ENCODE measurements at regions of chr4 and their contacts with region 1.

Region 1: GRCh38 chr4:40309250-40309774 is 25.8 kb upstream of the CHRNA9 start:
- DNase-seq: peak; percentile 98
- ATAC-seq: peak; percentile 54
- H3K4me3 Mint-ChIP-seq: peak overlapping the region; percentile 54
- H3K27ac Mint-ChIP-seq: peak overlapping the region; percentile 83
- H3K4me1 Mint-ChIP-seq: peaks cover 90% of the 10 kb centered on the region
- H3K27me3 Mint-ChIP-seq: no peaks in the 10 kb centered on the region
- CTCF ChIP-seq: peak; percentile 90

Region 2: GRCh38 chr4:40056716-40057585 is 252.4 kb before region 1 on chr4 and contains the start of gene N4BP2:
- CTCF ChIA-PET with region 1: interaction called, 16 read pairs
- POLR2A ChIA-PET with region 1: interaction called, 8 read pairs
- intact Hi-C with region 1: loop called (anchors 5 kb)
- DNase-seq: peak; percentile 77
- ATAC-seq: peak; percentile 59
- H3K4me3 Mint-ChIP-seq: peak within 1 kb of the TSS; percentile 96
- H3K27ac Mint-ChIP-seq: peak within 1 kb of the TSS; percentile 97
- H3K4me1 Mint-ChIP-seq: peaks cover 32% of the 10 kb centered on the region
- H3K27me3 Mint-ChIP-seq: peaks cover 6% of the 10 kb centered on the region
- CTCF ChIP-seq: peak; percentile 75
- total RNA-seq, gene N4BP2: 17.4 to 17.5 TPM

Region 3: GRCh38 chr4:40199999-40200874 is 109.1 kb before region 1 on chr4:
- CTCF ChIA-PET with region 1: interaction called, 26 read pairs
- POLR2A ChIA-PET with region 1: interaction called, 326 read pairs
- intact Hi-C with region 1: loop called (anchors 2 kb)
- DNase-seq: peak; percentile 94
- ATAC-seq: peak; percentile 50
- H3K4me3 Mint-ChIP-seq: peak overlapping the region; percentile 99
- H3K27ac Mint-ChIP-seq: peak overlapping the region; percentile 99
- H3K4me1 Mint-ChIP-seq: peaks cover 23% of the 10 kb centered on the region
- H3K27me3 Mint-ChIP-seq: no peaks in the 10 kb centered on the region
- CTCF ChIP-seq: no peak

Region 4: DNA sequence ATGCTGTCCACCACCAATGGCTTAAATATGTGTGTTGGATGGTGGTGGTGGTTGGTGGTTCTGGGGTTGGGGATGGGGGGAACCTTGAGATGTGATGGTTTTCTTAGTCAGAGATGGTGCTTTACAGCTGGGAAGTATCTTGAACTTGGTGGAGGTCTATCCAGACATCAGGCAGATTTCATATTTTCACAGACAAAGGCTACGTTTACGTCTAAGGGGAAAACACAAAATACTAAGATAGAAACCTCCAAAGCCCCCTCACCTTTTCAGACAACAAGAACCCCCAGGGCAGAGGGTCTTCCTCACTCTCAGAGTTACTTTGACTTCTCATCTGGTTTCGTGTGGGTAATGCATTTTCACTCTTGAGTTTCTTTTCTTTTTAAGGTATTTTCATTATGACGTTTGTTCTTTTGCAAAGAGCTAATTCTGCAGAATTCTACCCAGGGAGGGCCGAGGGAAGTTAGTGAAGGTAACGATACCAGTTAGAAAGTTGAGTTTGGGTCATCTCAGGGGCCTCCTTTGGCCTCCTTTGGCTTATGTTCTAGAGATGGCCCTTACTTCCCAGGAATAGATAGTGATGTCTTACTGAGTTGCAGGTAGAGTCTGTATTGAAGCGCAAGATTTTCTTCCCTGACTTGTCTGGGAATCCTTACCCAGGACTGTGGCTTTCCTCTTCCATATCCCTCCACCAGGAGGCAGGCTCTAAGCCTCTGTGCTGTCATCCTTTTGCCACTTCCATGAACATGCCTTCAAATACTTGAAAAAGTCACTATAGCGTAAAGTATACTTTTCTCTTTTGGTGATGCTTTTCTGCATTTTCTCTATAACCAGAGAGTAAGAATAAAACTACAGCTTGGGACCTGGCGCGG is 80.6 kb before region 1 on chr4:
- CTCF ChIA-PET with region 1: interaction called, 120 read pairs
- POLR2A ChIA-PET with region 1: interaction called, 128 read pairs
- intact Hi-C with region 1: loop called (anchors 1 kb)
- DNase-seq: peak; percentile 74
- ATAC-seq: peak; percentile 35
- H3K4me3 Mint-ChIP-seq: peak overlapping the region; percentile 64
- H3K27ac Mint-ChIP-seq: peak overlapping the region; percentile 96
- H3K4me1 Mint-ChIP-seq: peaks cover 86% of the 10 kb centered on the region
- H3K27me3 Mint-ChIP-seq: no peaks in the 10 kb centered on the region
- CTCF ChIP-seq: peak; percentile 70

Region 5: DNA sequence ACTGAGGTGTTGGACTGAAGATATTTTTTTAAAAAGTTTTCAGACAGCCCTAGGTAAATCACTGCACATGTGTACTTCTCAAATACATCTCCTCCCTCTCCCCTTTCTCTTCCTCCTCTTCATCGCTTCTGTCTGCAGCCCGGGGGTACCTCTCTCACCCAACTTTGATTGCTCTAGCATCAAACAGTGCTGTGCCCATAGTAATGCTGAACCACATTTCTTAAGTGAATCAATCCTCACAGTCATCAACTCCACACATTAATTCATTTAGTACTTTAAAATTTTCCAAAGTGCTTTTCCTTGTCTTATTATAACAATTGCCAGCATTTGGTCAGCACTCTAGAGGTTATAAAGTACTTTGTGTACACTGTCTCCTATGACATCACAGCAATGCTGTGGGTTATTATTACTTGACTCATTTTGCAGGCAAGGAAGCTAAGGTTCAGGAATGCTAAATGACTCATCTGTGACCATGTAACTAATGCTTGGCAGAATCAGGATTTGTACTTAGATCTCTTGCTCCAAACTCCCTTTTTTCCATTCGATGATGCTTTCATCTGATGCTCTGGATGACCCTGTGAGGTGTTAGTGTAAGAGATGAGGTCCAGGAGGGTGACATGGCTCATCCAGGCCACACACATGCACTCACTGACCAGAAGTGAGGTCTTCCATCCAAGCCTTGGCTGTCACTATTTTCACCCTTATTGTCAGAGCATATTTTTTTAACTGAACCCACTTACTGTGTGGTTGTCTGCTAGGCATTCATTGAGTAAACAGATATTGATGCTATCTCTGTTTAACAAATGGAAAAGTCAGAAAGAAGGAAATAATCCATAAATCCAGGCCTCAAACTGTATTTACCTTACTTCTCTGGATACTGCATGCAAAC is 53.7 kb before region 1 on chr4:
- CTCF ChIA-PET with region 1: interaction called, 9 read pairs
- POLR2A ChIA-PET with region 1: interaction called, 24 read pairs
- intact Hi-C with region 1: loop called (anchors 2 kb)
- DNase-seq: no peak
- ATAC-seq: peak; percentile 15
- H3K4me3 Mint-ChIP-seq: peak overlapping the region; percentile 40
- H3K27ac Mint-ChIP-seq: peak overlapping the region; percentile 82
- H3K4me1 Mint-ChIP-seq: peaks cover 76% of the 10 kb centered on the region
- H3K27me3 Mint-ChIP-seq: no peaks in the 10 kb centered on the region
- CTCF ChIP-seq: no peak

Region 6: DNA sequence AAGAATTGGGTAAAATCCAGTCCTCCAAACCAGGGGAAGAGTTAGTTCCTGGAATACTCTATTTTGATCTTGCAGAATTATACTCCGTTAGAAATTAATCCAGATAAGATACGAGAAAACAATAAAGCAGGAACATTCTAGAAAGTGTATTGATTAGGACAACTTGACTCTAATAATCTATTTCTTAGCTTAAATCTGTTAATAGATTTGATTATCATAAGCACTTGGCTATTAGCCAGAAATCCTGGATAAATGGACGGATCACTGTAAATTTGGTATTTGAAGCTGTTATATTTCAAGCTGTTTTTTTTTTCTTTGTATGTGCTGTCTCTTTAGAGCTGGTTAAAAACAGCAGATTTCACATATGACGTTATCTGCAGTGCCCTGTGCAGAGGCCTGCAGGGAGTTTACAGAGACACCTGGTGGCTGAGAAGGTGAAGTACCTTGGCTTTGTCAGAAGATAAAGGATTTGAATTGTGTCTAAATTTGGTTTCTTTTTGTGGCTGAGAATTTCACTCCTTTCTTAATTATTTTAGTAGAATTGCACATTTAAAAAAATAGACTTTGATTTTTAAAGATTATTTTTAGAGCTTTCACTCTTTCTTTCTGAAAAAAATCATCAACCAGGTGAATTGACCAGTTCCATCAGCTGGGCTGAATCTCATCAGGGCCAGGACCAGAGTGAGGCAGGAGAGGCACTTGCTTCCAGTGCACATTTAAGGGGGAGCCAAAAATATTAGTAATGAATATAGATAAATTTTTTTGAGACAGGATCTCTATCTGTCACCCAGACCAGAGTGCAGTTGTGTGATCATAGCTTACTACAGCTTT is 16.1 kb after region 1 on chr4:
- CTCF ChIA-PET with region 1: interaction called, 14 read pairs
- POLR2A ChIA-PET with region 1: interaction called, 4 read pairs
- intact Hi-C with region 1: no loop called
- DNase-seq: peak; percentile 77
- ATAC-seq: peak; percentile 98
- H3K4me3 Mint-ChIP-seq: no peak overlapping the region
- H3K27ac Mint-ChIP-seq: peak overlapping the region; percentile 36
- H3K4me1 Mint-ChIP-seq: peaks cover 35% of the 10 kb centered on the region
- H3K27me3 Mint-ChIP-seq: peaks cover 3% of the 10 kb centered on the region
- CTCF ChIP-seq: peak; percentile 94

Region 7: DNA sequence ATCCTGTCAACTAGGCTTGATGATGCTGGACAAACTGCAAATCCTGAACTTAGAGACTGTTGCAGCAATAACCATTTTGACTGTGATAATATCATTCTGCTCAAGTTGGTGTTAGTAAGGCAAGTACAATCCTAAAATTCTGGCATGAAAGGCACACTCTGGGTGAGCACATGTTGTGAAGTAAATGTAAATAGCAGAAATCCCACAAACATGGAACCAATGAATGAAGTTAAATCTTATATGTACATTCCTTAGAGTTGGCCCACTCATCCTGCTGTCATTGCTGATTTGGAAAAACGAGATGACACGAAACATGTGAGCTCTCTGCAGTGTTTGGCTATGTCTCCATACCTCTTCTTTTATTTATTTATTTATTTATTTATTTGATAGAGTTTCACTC is 299.3 kb after region 1 on chr4:
- CTCF ChIA-PET with region 1: no interaction called
- POLR2A ChIA-PET with region 1: no interaction called
- intact Hi-C with region 1: no loop called
- DNase-seq: no peak
- ATAC-seq: no peak
- H3K4me3 Mint-ChIP-seq: no peak overlapping the region
- H3K27ac Mint-ChIP-seq: no peak overlapping the region
- H3K4me1 Mint-ChIP-seq: peaks cover 2% of the 10 kb centered on the region
- H3K27me3 Mint-ChIP-seq: peaks cover 9% of the 10 kb centered on the region
- CTCF ChIP-seq: no peak

Measured in activated CD8-positive, alpha-beta T cell treated with anti-CD3 and anti-CD28 coated beads for 36 hours (primary cell).